ENCODE measurements at regions of chr12 and their contacts with region 1.

Region 1: DNA sequence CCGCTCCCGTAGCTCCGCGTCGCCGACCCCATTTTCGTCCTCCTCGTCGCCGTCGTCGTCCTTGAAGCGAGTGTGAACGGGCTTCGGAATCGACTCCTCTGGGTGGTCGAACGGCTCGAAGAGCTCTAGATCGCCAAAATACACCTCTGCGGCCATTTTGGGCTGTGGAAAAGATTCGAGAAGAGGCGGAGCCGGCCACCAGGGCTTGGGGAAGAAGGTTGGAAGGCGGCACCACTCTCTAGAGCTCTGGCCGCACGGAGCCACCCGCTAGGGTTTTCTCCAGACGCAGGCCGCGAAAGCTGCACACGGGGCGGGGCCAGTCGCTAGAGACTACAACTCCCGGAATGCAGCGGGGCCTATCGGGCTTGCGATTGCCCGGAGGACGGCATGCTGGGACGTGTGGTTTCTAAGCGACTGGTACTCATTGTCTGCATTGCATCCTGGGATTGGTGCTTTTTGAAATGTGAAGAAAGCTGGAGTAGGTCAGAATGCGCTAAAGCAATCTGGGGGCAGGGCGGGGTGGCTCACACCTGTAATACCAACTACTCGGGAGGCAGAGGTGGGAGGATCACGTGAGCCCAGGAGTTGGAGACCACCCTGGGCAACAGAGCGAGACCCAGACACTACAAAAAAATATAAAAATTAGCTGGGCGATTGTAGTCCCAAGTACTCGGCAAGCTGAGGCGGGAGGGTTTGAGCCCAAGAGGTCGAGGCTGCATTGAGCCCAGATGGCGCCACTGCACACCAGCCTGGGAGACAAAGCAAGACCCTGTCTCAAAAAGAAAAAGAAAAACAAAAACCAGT is at the start of gene ZCCHC8:
- DNase-seq: peak; percentile 98
- H3K4me3 Mint-ChIP-seq: peak within 1 kb of the TSS; percentile 93
- H3K27ac Mint-ChIP-seq: peak within 1 kb of the TSS; percentile 97
- H3K4me1 Mint-ChIP-seq: peaks cover 39% of the 10 kb centered on the region
- H3K27me3 Mint-ChIP-seq: no peaks in the 10 kb centered on the region
- total RNA-seq, gene ZCCHC8: 25.9 to 26.0 TPM

Region 2: GRCh38 chr12:121649351-121649750 is 851.5 kb before region 1 on chr12:
- CTCF ChIA-PET with region 1: no interaction called
- intact Hi-C with region 1: no loop called
- DNase-seq: no peak
- H3K4me3 Mint-ChIP-seq: no peak overlapping the region
- H3K27ac Mint-ChIP-seq: peak overlapping the region; percentile 63
- H3K4me1 Mint-ChIP-seq: peaks cover 28% of the 10 kb centered on the region
- H3K27me3 Mint-ChIP-seq: no peaks in the 10 kb centered on the region

Region 3: GRCh38 chr12:121802846-121803630 is 697.8 kb before region 1 on chr12:
- CTCF ChIA-PET with region 1: no interaction called
- intact Hi-C with region 1: loop called (anchors 2 kb)
- DNase-seq: peak; percentile 95
- H3K4me3 Mint-ChIP-seq: peak overlapping the region; percentile 97
- H3K27ac Mint-ChIP-seq: peak overlapping the region; percentile 100
- H3K4me1 Mint-ChIP-seq: peaks cover 33% of the 10 kb centered on the region
- H3K27me3 Mint-ChIP-seq: no peaks in the 10 kb centered on the region

Region 4: GRCh38 chr12:122399592-122400373 is 101.1 kb before region 1 on chr12:
- CTCF ChIA-PET with region 1: interaction called, 7 read pairs
- intact Hi-C with region 1: loop called (anchors 1 kb)
- DNase-seq: peak; percentile 70
- H3K4me3 Mint-ChIP-seq: peak overlapping the region; percentile 51
- H3K27ac Mint-ChIP-seq: peak overlapping the region; percentile 81
- H3K4me1 Mint-ChIP-seq: peaks cover 44% of the 10 kb centered on the region
- H3K27me3 Mint-ChIP-seq: no peaks in the 10 kb centered on the region

Region 5: GRCh38 chr12:122413516-122414404 is 87.1 kb before region 1 on chr12:
- CTCF ChIA-PET with region 1: no interaction called
- intact Hi-C with region 1: no loop called
- DNase-seq: no peak
- H3K4me3 Mint-ChIP-seq: peak overlapping the region; percentile 59
- H3K27ac Mint-ChIP-seq: peak overlapping the region; percentile 97
- H3K4me1 Mint-ChIP-seq: peaks cover 50% of the 10 kb centered on the region
- H3K27me3 Mint-ChIP-seq: no peaks in the 10 kb centered on the region

Region 6: GRCh38 chr12:122646517-122647217 is 145.8 kb after region 1 on chr12:
- CTCF ChIA-PET with region 1: no interaction called
- intact Hi-C with region 1: loop called (anchors 1 kb)
- DNase-seq: peak; percentile 81
- H3K4me3 Mint-ChIP-seq: peak overlapping the region; percentile 44
- H3K27ac Mint-ChIP-seq: peak overlapping the region; percentile 63
- H3K4me1 Mint-ChIP-seq: peaks cover 14% of the 10 kb centered on the region
- H3K27me3 Mint-ChIP-seq: no peaks in the 10 kb centered on the region

Region 7: DNA sequence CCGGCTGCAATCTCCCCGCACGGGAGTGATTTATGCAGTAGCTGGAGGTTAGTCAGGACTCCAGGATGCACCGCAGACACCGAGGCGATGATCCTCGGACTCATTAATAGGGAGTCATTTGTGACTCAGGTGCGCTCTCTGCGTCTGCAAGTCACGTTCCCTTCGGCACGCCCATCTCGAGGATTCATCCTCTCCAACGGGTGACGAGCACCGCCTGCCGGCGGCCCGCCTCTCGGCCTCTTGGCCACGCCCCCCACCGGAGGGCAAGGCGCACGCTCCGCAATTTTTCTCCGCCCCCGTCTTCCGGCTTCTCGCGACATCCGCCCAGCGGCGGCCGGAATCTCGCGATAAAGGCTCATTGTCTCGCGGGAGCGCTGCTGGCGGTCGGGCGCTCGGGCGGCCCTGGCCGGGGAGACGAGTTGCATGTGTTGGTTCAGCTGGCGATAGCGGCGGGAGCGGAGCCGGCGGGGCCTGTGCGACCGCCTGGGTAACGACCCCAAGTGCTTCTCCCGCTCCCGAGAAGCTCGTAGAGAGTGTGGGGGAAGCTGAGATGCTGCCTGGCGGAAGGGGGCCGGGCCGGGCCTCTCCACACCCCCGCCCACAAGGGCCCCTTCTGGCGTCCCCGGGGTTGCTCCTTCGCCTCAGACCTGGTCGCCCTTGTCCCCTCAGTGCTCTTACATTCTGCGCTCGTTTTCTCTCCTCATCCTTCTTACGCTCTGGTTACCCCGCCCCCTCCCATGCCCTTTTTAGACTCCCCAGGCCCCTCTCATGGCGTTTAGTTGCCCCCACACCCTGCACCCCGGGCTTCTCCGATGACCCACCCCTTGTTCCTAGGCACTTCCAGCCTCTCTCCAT is 251.8 kb after region 1 on chr12 and contains the start of gene DENR:
- CTCF ChIA-PET with region 1: no interaction called
- intact Hi-C with region 1: loop called (anchors 1 kb)
- DNase-seq: peak; percentile 100
- H3K4me3 Mint-ChIP-seq: peak within 1 kb of the TSS; percentile 98
- H3K27ac Mint-ChIP-seq: peak within 1 kb of the TSS; percentile 90
- H3K4me1 Mint-ChIP-seq: peaks cover 51% of the 10 kb centered on the region
- H3K27me3 Mint-ChIP-seq: no peaks in the 10 kb centered on the region
- total RNA-seq, gene DENR: 47.9 to 52.4 TPM

Measured in activated naive CD4-positive, alpha-beta T cell treated with anti-CD3 and anti-CD28 coated beads for 36 hours (primary cell).